Colonic mucosa (tissue), 4 donors: ENCODE measurements at regions of chr5 and their contacts with region 1.

Region 1: GRCh38 chr5:126540631-126541030 is 54.4 kb downstream of the ALDH7A1 start:
- DNase-seq: no peak
- H3K4me3 ChIP-seq: no peak overlapping the region
- H3K27ac ChIP-seq: no peak overlapping the region
- H3K4me1 ChIP-seq: no peaks in the 10 kb centered on the region
- H3K27me3 ChIP-seq: no peaks in the 10 kb centered on the region
- CTCF ChIP-seq: no peak

Region 2: DNA sequence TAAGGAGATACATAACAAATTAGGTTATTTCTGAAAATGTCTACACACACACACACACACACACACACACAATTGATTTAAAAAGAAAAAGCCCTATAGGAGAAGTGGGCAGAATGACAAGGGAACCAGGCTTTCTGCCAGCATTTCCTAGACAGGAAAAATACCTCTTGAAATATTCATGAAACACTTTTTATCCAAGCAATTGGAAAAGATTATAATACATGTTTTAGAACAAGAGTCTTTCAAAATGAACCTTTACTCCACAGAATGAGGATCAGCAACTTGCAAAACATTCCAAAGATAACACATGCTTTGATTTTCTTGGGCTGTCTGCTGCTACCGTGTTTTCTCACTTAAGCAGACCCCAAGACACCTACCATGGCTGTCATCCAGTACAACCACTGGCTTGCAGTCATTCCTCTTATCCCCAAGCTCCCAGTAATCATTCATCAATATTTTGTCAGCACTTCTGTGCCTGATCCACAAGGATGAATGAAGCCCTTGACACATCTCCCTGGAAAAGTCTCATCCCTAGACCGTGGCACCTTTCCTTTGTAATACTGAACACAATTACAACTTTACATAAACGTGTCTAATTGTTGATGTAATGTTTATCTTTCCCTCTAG is 1077.1 kb before region 1 on chr5:
- intact Hi-C with region 1: no loop called
- DNase-seq: no peak
- H3K4me3 ChIP-seq: no peak overlapping the region
- H3K27ac ChIP-seq: no peak overlapping the region
- H3K4me1 ChIP-seq: no peaks in the 10 kb centered on the region
- H3K27me3 ChIP-seq: no peaks in the 10 kb centered on the region
- CTCF ChIP-seq: no peak

Region 3: GRCh38 chr5:126354012-126354857 is 186.4 kb before region 1 on chr5:
- intact Hi-C with region 1: loop called (anchors 2 kb)
- DNase-seq: no peak
- H3K4me3 ChIP-seq: no peak overlapping the region
- H3K27ac ChIP-seq: peak overlapping the region; percentile 4
- H3K4me1 ChIP-seq: no peaks in the 10 kb centered on the region
- H3K27me3 ChIP-seq: no peaks in the 10 kb centered on the region
- CTCF ChIP-seq: peak; percentile 53